Endothelial cell of umbilical vein (primary cell): ENCODE measurements at regions of chr17 and their contacts with region 1.

Region 1: GRCh38 chr17:60641810-60642220 is 35.8 kb upstream of the BCAS3 start:
- DNase-seq: peak; percentile 87
- H3K4me3 ChIP-seq: no peak overlapping the region
- H3K27ac ChIP-seq: no peak overlapping the region
- H3K4me1 ChIP-seq: peaks cover 3% of the 10 kb centered on the region
- H3K27me3 ChIP-seq: no peaks in the 10 kb centered on the region
- CTCF ChIP-seq: peak; percentile 35 to 46
- POLR2A ChIP-seq: no peak

Region 2: GRCh38 chr17:60421273-60421934 is 220.4 kb before region 1 on chr17:
- CTCF ChIA-PET with region 1: interaction called, 4 read pairs
- POLR2A ChIA-PET with region 1: no interaction called
- dilution Hi-C with region 1: no loop called
- intact Hi-C with region 1: loop called (anchors 1 kb)
- DNase-seq: peak; percentile 71
- H3K4me3 ChIP-seq: peak overlapping the region; percentile 19 to 61 (median 46)
- H3K27ac ChIP-seq: peak overlapping the region; percentile 47
- H3K4me1 ChIP-seq: peaks cover 3% of the 10 kb centered on the region
- H3K27me3 ChIP-seq: no peaks in the 10 kb centered on the region
- CTCF ChIP-seq: peak; percentile 85 to 99
- POLR2A ChIP-seq: no peak

Region 3: GRCh38 chr17:60468371-60468770 is 173.4 kb before region 1 on chr17:
- CTCF ChIA-PET with region 1: interaction called, 10 read pairs
- POLR2A ChIA-PET with region 1: no interaction called
- dilution Hi-C with region 1: no loop called
- intact Hi-C with region 1: loop called (anchors 5 kb)
- DNase-seq: peak; percentile 87
- H3K4me3 ChIP-seq: no peak overlapping the region
- H3K27ac ChIP-seq: peak overlapping the region; percentile 67
- H3K4me1 ChIP-seq: peaks cover 28% of the 10 kb centered on the region
- H3K27me3 ChIP-seq: no peaks in the 10 kb centered on the region
- CTCF ChIP-seq: no peak
- POLR2A ChIP-seq: peak; percentile 37

Region 4: DNA sequence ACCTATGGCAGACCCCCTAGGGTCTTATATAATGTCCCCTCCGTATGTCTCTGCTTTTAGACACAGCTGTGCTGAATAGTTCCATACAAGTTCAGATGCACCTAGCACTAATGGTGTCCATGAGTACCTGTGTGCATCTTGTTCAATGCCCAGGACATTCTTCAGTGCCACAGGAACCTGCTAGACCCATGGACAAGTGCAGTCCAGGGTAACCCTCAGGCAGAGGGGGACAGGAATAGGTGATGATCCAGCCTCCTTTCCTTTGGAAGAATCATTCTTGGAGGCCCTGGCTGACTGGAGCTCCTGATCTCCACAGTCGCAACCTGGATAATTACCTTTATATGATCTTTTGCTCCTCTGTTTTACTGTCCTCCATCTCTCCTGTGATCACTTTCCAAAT is 70.3 kb before region 1 on chr17:
- CTCF ChIA-PET with region 1: interaction called, 20 read pairs
- POLR2A ChIA-PET with region 1: no interaction called
- dilution Hi-C with region 1: no loop called
- intact Hi-C with region 1: loop called (anchors 1 kb)
- DNase-seq: no peak
- H3K4me3 ChIP-seq: no peak overlapping the region
- H3K27ac ChIP-seq: peak overlapping the region; percentile 73
- H3K4me1 ChIP-seq: peaks cover 42% of the 10 kb centered on the region
- H3K27me3 ChIP-seq: no peaks in the 10 kb centered on the region
- CTCF ChIP-seq: no peak
- POLR2A ChIP-seq: no peak

Region 5: DNA sequence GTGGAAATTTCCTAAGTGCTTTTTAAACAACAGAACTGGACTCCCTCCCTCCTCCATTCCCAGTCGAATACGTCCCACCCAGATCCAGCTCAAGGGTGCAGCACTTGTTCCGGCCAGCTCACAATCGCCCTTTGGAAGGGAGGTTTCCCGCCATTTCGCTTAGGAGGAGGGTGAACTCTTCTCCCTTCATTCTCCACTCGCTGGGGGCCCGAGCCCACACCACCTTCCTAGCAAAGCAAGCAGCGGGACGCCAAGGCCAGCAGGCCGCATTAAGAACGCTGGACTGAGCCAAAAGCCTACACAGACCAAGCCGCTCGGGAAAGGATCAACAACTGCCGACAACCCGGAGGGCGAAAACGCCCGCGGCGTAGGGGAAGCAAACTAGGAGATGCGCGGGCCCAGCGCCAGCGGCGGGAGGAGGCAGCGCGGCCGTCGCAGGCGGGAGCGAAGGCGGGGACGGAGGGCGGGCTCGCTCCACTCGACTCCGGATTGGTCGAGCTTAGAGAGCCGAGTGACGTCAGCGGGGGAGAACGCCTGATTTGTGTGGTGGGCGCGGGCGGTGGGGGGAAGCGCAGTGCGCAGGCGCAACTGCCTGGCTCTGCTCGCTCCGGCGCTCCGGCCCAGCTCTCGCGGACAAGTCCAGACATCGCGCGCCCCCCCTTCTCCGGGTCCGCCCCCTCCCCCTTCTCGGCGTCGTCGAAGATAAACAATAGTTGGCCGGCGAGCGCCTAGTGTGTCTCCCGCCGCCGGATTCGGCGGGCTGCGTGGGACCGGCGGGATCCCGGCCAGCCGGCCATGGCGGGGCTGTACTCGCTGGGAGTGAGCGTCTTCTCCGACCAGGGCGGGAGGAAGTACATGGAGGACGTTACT is 42.0 kb before region 1 on chr17 and contains the start of gene PPM1D:
- CTCF ChIA-PET with region 1: interaction called, 22 read pairs
- POLR2A ChIA-PET with region 1: no interaction called
- dilution Hi-C with region 1: no loop called
- intact Hi-C with region 1: loop called (anchors 1 kb)
- DNase-seq: peak; percentile 100
- H3K4me3 ChIP-seq: peak within 1 kb of the TSS; percentile 81 to 98 (median 96)
- H3K27ac ChIP-seq: peak within 1 kb of the TSS; percentile 95
- H3K4me1 ChIP-seq: peaks cover 15% of the 10 kb centered on the region
- H3K27me3 ChIP-seq: no peaks in the 10 kb centered on the region
- CTCF ChIP-seq: no peak
- POLR2A ChIP-seq: peak; percentile 97
- total RNA-seq, gene PPM1D: 18.6 and 19.0 TPM in 2 replicates